Prostate gland (tissue), 2 donors: ENCODE measurements at regions of chr11 and their contacts with region 1.

Region 1: GRCh38 chr11:95680169-95680929 is 109.2 kb downstream of the FAM76B start:
- DNase-seq: peak; percentile 19
- H3K4me3 ChIP-seq: no peak overlapping the region
- H3K27ac ChIP-seq: peak overlapping the region in 1 of 2 donors; percentile 4
- H3K4me1 ChIP-seq: no peaks in the 10 kb centered on the region
- H3K27me3 ChIP-seq: no peaks in the 10 kb centered on the region
- CTCF ChIP-seq: no peak
- POLR2A ChIP-seq: no peak

Region 2: DNA sequence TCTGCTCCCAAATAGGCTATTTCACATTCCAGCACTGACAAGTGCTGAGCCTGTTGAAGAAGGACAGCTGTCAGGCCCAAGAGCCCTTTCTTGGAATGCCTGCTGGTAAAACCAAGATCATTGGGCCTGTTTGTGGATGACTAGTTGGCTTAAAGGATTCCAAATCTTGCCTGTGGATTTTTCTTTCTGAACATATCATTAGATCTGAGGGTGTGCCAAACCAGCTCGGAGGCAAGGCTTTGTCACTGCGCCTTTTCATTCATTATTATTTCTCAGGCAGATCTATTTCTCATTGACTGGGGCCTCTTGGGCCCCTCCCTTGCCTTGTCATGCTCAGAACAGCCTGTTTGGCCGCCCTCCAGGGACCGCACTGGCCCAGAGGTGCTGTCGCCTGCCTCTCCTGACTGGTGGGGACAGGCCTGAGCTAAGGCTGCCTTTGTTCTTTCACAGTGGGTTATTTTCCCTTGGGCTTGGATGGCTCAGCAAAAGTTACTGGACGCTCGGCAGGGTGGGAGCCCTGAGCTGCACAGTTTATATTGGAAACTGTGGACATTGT is 226.7 kb before region 1 on chr11:
- intact Hi-C with region 1: no loop called
- DNase-seq: peak; percentile 89
- H3K4me3 ChIP-seq: no peak overlapping the region
- H3K27ac ChIP-seq: no peak overlapping the region
- H3K4me1 ChIP-seq: no peaks in the 10 kb centered on the region
- H3K27me3 ChIP-seq: no peaks in the 10 kb centered on the region
- CTCF ChIP-seq: peak in 1 of 4 experiments; percentile 5
- POLR2A ChIP-seq: no peak

Region 3: GRCh38 chr11:95647355-95647754 is 33.0 kb before region 1 on chr11:
- intact Hi-C with region 1: loop called (anchors 5 kb)
- DNase-seq: peak; percentile 76
- H3K4me3 ChIP-seq: no peak overlapping the region
- H3K27ac ChIP-seq: peak overlapping the region; percentile 79 to 84
- H3K4me1 ChIP-seq: no peaks in the 10 kb centered on the region
- H3K27me3 ChIP-seq: no peaks in the 10 kb centered on the region
- CTCF ChIP-seq: no peak
- POLR2A ChIP-seq: no peak